AG04449 (cell line): ENCODE measurements at regions of chr10 and their contacts with region 1.

Region 1: DNA sequence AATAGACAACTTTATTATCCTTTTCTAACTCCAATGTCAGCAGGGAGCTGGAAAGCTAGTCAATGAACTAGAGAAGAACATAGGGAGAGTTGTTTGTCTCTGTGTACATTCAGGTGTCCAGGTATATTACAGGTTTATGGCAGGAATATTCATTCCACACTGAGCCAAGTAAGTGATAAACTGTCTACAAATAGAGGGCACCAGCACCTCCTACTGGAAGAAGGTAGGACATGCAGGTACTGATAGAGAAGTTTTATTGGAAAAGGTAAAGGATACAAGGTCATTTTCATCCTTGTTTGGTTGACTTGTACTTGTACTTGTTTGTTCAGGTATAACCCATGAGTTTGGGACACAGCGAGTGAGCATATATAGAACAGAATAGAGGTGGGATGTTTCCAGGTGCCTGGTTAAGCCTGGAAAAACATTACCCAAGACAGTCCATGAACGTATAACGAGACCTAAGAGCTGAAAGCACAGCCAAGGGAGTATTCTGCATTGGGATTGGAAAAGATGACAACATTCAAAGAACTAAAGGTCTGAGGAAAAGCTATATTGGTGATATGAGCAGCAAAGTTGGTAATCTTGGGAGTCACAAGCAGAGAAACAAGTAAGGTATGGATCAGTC is 61.4 kb upstream of the PPP1R3C start:
- DNase-seq: no peak
- H3K4me3 ChIP-seq: no peak overlapping the region
- CTCF ChIP-seq: peak; percentile 72

Region 2: DNA sequence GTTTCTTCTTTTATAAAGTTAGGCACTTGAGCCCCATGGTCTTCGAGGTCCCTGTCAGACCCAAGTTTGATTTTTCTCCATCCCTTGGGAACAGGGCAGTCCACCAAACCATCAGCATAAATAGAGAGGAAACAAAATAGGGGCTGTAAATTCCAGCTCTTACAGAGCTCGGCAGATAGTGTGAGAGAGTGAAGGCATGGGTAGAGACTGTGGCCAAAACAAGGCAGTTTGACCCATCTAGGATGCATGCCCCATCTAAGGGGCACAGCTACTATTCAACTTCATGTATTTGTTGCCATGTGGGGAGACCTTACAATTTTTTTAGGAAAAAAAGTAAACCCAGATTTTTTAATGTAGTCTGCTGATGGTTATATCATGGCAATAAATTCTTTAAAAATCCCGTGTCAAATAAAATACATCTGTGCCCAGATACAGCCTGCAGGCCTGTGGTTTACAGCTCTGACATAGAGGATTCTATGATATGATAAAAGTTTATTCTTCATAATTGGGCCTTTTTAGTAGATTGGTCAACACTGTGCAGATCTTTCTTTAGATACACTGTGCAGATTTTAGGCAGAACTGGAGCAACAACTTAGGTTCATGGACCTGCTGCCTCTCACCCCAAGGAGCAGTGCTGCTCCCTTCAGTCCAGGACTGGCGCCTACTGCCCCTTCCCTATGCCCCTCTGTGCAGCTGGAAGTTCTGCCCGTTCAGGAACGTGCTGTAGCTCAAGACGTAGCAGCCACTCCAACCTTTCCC is 66.8 kb before region 1 on chr10:
- CTCF ChIA-PET with region 1: interaction called, 102 read pairs
- POLR2A ChIA-PET with region 1: interaction called, 5 read pairs
- DNase-seq: no peak
- H3K4me3 ChIP-seq: peak overlapping the region; percentile 79
- CTCF ChIP-seq: peak; percentile 3

Region 3: DNA sequence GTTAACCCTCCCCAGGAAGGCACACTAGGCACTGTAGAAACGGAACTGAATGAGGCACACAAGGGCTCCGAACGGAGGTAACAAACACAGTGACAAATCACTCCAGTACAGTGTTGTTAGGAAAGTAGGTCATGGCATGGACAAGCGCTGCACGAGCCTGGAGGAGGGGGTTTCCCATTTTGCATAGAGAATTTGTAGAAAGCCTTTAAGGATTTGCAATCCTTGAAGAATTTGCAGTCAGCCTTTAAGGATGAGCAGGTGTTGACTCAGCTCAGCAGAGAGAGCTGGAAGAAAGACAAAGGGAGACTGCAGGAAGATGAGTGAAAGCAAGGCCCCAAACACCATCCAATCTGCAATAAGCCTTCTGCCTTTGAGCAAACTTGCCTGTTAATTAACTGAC is 10.3 kb before region 1 on chr10:
- CTCF ChIA-PET with region 1: interaction called, 17 read pairs
- POLR2A ChIA-PET with region 1: no interaction called
- DNase-seq: peak; percentile 65
- H3K4me3 ChIP-seq: no peak overlapping the region
- CTCF ChIP-seq: no peak

Region 4: DNA sequence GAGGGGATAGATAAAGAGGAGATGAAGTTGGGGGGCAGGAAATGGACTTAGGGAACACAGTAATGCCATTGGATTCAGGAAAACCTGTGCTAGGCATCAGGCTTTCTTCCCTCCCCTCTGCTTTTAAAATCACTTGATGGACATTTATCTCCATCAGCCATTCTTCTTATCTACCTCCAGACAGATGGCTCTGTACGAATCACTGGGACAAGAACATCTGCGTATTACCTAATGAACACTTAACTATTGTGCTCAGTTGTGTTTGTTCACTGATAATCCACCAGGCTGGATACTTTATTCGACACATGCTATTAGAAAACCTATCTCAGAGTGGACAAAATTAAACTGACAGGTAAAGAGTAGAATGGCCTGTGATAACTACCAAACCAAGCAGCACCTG is 143.9 kb after region 1 on chr10:
- CTCF ChIA-PET with region 1: no interaction called
- POLR2A ChIA-PET with region 1: no interaction called
- DNase-seq: no peak
- H3K4me3 ChIP-seq: no peak overlapping the region
- CTCF ChIP-seq: no peak